Activated CD8-positive, alpha-beta T cell treated with anti-CD3 and anti-CD28 coated beads, Interleukin-2, amount 10 ng/mL, durations not matched to agents 7 days and 5 days (primary cell): ENCODE measurements at regions of chr4 and their contacts with region 1.

Region 1: DNA sequence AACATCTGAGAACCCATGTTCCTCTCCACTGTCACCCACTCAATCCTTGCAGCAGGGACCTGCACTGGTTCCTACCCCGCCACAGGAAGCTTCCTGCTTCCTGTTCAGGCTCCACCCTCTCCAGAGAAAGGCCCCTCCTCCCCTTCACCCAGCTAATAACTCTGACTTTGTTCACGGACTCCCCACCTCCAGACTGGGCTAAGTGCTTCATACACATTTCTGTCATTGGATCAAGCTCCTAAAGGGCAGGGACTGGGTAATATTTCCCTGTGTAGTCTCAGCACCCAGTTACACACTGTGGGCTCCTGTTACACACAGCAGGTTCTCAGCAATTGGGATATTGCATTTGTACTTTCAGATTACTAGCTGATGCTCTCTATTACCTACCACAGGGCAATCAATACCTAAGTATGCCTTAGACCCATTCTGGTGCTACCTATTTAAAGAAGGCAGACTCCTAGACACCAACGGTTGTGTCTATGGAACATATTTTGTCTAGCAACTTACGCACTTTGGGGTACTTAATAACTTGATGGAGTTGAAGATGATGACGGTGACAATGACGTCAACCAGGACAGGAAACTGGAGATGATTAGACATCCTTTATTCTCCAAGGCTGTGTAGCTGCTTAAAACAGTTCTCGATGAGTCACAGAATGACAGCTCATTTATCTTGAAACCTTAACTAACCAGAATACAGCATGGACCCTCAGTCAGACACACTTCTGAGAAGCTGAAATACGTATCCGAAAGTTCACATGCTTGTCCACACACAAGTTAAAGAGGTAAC is 58.1 kb downstream of the MAML3 start:
- DNase-seq: peak; percentile 84
- ATAC-seq: peak; percentile 75
- H3K4me3 Mint-ChIP-seq: peak overlapping the region; percentile 79
- H3K27ac Mint-ChIP-seq: peak overlapping the region; percentile 97
- H3K4me1 Mint-ChIP-seq: peaks cover 91% of the 10 kb centered on the region
- H3K27me3 Mint-ChIP-seq: no peaks in the 10 kb centered on the region

Region 2: GRCh38 chr4:140071806-140072205 is 24.1 kb before region 1 on chr4:
- CTCF ChIA-PET with region 1: interaction called, 7 read pairs
- POLR2A ChIA-PET with region 1: interaction called, 15 read pairs
- DNase-seq: peak; percentile 88
- ATAC-seq: peak; percentile 85
- H3K4me3 Mint-ChIP-seq: peak overlapping the region; percentile 55
- H3K27ac Mint-ChIP-seq: peak overlapping the region; percentile 85
- H3K4me1 Mint-ChIP-seq: peaks cover 58% of the 10 kb centered on the region
- H3K27me3 Mint-ChIP-seq: peaks cover 14% of the 10 kb centered on the region

Region 3: DNA sequence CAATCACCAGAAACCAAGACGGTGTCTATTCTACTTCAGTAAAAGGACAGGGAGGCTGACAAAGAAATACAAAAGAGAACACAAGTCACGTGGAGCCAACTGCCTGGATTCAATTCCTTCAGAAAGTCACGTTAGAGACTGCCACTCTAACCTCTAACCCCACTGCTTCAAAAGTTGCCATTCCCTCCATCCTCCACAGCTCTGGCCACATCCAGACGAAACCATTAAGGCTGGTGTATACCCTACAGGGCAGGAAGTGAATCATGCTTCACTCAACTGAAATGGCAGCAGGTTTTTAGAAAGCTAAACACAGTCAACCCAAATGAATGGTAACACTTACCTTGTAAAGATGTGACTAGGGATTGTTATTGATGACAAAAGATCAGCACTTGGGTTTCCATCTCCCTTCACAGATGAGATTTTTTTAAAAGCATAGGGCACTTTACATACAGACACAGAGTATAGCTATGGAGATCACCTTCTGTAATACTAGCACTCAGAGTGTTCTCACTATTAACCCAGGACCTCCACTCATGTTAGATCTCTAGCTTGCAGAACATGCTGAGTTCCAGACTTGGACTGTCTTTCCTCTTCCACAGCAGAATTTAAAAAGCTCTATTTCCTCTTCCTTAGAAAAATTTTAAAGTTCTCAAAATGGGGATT is 20.7 kb after region 1 on chr4:
- CTCF ChIA-PET with region 1: interaction called, 8 read pairs
- POLR2A ChIA-PET with region 1: interaction called, 10 read pairs
- DNase-seq: peak; percentile 74
- ATAC-seq: peak; percentile 99
- H3K4me3 Mint-ChIP-seq: peak overlapping the region; percentile 4
- H3K27ac Mint-ChIP-seq: peak overlapping the region; percentile 93
- H3K4me1 Mint-ChIP-seq: peaks cover 37% of the 10 kb centered on the region
- H3K27me3 Mint-ChIP-seq: no peaks in the 10 kb centered on the region

Region 4: DNA sequence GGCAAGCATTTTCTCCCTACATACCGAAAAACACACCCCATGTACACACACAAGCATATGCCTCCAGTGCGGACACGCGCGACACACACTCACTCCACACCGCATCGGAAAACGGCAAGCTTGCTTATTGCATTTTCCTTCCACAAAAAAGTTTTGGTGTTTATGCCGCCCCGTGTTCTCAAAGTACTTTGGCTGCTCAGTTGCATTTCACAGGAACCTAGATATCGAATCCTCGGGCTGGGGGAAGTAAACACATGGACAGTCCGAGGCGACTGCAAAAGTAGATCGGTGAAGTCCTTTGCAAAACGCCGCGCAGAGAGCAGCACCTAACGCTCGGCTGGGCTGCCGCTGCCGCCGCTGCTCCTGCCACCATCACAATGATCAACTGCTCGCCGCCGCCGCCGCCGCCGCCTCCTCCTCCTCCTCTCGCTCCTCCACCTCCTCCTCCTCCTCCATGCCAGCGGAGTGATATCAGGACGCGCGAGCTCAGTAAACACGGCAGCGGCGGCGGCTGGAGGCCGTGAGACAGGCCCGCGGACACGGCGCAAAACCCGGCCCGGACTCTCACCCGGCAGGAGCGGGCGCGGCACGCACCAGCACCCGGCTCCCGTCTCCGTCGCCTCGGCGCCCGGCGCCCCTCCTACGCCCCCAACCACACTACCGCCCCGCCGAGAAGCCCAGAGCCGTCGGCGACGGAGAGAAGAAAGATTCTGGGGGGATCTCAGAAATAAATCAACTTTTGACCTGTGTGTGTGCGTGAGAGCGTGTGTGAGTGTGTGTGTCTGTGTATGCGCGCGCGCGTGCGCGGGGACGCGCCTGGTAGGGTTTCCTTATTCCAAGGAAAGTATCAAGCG is 58.1 kb after region 1 on chr4 and contains the start of gene MAML3:
- CTCF ChIA-PET with region 1: interaction called, 12 read pairs
- POLR2A ChIA-PET with region 1: interaction called, 33 read pairs
- DNase-seq: peak; percentile 89
- ATAC-seq: peak; percentile 41
- H3K4me3 Mint-ChIP-seq: peak within 1 kb of the TSS; percentile 90
- H3K27ac Mint-ChIP-seq: peak within 1 kb of the TSS; percentile 79
- H3K4me1 Mint-ChIP-seq: peaks cover 39% of the 10 kb centered on the region
- H3K27me3 Mint-ChIP-seq: peaks cover 14% of the 10 kb centered on the region
- total RNA-seq, gene MAML3: 4.0 to 4.1 TPM

Region 5: GRCh38 chr4:140266991-140267426 is 171.1 kb after region 1 on chr4:
- CTCF ChIA-PET with region 1: no interaction called
- POLR2A ChIA-PET with region 1: no interaction called
- DNase-seq: no peak
- ATAC-seq: no peak
- H3K4me3 Mint-ChIP-seq: no peak overlapping the region
- H3K27ac Mint-ChIP-seq: no peak overlapping the region
- H3K4me1 Mint-ChIP-seq: no peaks in the 10 kb centered on the region
- H3K27me3 Mint-ChIP-seq: peaks cover 8% of the 10 kb centered on the region